ENCODE measurements at regions of chr1 and their contacts with region 1.

Region 1: DNA sequence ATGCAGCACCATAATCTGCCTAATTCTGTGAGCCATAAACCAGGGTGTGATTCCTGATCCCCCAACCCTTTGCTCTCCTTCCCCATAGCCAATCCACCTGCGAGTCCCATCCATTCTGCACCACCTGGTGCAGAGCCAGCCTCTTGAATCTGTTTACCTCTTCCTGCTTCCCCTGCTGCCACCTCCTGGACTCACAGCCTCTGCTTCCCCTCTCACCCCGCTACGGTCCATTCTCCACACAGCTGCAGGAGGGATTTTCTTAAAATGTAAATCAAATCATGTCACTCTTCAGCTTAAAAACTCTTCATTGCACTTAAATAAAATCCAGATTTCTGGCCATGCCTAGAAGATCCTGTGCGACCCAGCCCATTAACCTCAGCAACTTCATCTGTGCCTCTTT is 186.7 kb downstream of the FOXD2 start:
- DNase-seq: no peak
- H3K4me3 Mint-ChIP-seq: no peak overlapping the region
- H3K27ac Mint-ChIP-seq: no peak overlapping the region
- H3K4me1 Mint-ChIP-seq: no peaks in the 10 kb centered on the region
- H3K27me3 Mint-ChIP-seq: peaks cover 7% of the 10 kb centered on the region
- CTCF ChIP-seq: no peak

Region 2: DNA sequence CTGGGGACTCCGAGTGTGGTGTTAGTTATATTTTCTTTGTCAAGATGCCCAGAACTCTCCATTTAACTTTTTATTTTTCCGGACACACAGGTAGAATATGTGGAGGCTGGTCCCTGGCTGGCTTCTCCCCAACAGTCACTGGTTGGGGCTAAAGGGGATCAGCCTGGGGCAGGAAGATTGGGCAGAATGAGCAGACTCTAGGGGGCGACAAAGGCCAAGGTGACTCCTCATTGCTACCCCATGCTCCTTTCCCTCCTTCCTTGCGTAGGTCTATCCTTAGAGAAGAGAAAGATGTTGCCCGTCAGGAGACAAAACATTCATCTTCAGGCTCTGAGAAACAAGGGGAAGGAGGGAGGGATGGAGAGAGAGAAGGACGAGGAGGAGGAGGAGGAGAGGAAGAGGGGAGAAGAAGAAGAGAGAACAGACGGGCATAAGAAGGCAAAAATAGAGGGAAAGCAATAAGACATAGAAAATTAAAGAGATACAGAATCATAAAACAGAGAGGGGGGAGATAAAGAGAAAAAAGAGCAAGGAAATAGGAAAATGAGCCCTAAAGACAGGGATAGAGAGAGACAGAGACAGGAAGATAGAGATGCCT is 96.8 kb before region 1 on chr1:
- CTCF ChIA-PET with region 1: no interaction called
- intact Hi-C with region 1: loop called (anchors 5 kb)
- DNase-seq: peak; percentile 79
- H3K4me3 Mint-ChIP-seq: no peak overlapping the region
- H3K27ac Mint-ChIP-seq: no peak overlapping the region
- H3K4me1 Mint-ChIP-seq: peaks cover 15% of the 10 kb centered on the region
- H3K27me3 Mint-ChIP-seq: peaks cover 33% of the 10 kb centered on the region
- CTCF ChIP-seq: peak; percentile 80

Measured in Calu3 (cell line).